Activated CD8-positive, alpha-beta T cell treated with anti-CD3 and anti-CD28 coated beads for 36 hours (primary cell): ENCODE measurements at regions of chr1 and their contacts with region 1.

Region 1: DNA sequence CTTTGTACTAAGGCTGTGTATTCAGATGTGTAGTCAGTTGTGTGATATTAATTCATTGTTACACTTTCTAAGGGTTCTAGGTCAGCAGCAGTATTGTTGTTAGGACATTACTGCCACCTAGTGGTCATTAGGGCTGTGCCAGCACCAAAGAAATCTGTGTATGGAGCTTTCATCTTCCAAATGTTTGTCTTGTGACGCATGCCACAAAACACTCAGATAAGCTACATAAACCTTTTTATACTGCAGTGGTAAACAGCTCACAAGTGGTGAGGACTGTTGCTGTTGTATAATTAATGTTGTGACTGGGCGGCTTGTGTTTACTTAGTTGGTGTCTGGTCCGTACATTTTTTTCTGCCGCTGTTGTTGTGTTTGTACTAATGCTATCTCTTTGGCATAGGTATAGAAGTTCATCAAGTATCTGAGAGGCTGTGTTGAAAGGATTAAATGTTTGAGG is 51.7 kb downstream of the S1PR1 start:
- DNase-seq: peak; percentile 79
- ATAC-seq: peak; percentile 25
- H3K4me3 Mint-ChIP-seq: no peak overlapping the region
- H3K27ac Mint-ChIP-seq: peak overlapping the region; percentile 43
- H3K4me1 Mint-ChIP-seq: peaks cover 83% of the 10 kb centered on the region
- H3K27me3 Mint-ChIP-seq: no peaks in the 10 kb centered on the region
- CTCF ChIP-seq: peak; percentile 88

Region 2: DNA sequence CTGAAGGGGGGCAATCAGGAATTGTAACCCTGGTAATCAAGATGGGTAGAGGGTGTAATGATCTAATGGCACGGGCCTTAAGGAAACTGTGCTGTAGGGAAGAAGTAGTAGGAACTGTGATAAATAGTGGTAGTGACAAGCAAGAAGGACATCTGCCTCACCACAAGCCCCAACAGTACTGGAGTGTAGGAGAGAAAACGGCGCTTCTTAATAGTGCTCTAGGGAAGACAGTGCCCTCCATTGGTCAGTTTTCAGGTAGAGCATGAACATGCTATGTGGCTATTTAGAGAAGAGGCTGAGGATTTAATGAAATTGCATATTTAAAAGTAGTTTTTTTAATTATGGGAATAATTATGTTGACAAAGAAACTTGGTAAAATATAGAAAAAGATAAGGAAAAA is 360.4 kb before region 1 on chr1:
- CTCF ChIA-PET with region 1: interaction called, 18 read pairs
- POLR2A ChIA-PET with region 1: no interaction called
- intact Hi-C with region 1: no loop called
- DNase-seq: peak; percentile 28
- ATAC-seq: peak; percentile 13
- H3K4me3 Mint-ChIP-seq: no peak overlapping the region
- H3K27ac Mint-ChIP-seq: no peak overlapping the region
- H3K4me1 Mint-ChIP-seq: peaks cover 52% of the 10 kb centered on the region
- H3K27me3 Mint-ChIP-seq: no peaks in the 10 kb centered on the region
- CTCF ChIP-seq: peak; percentile 37

Region 3: GRCh38 chr1:101128211-101128727 is 160.2 kb before region 1 on chr1:
- CTCF ChIA-PET with region 1: interaction called, 48 read pairs
- POLR2A ChIA-PET with region 1: interaction called, 5 read pairs
- intact Hi-C with region 1: no loop called
- DNase-seq: peak; percentile 53
- ATAC-seq: peak; percentile 55
- H3K4me3 Mint-ChIP-seq: peak overlapping the region; percentile 1
- H3K27ac Mint-ChIP-seq: peak overlapping the region; percentile 72
- H3K4me1 Mint-ChIP-seq: peaks cover 61% of the 10 kb centered on the region
- H3K27me3 Mint-ChIP-seq: no peaks in the 10 kb centered on the region
- CTCF ChIP-seq: no peak

Region 4: DNA sequence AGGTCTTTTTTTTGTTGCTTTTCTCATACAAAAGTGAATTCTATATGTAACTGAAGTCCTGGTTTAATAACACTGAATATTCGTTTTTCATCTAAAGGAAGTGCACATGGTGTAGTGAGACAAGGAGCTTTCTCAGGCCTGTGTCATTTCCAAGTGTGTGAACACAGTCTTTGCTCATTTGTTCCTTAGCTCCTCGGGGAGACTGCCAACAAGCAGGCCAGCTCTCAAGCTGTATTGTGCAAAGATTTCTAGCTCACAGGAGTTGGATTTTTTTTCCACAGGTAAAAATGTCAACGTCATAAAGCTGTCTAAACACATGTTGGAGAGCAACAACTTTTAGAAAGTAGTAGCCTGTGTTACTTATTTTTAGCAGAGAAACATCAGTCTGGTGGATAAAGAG is 139.5 kb before region 1 on chr1:
- CTCF ChIA-PET with region 1: interaction called, 12 read pairs
- POLR2A ChIA-PET with region 1: no interaction called
- intact Hi-C with region 1: no loop called
- DNase-seq: no peak
- ATAC-seq: no peak
- H3K4me3 Mint-ChIP-seq: no peak overlapping the region
- H3K27ac Mint-ChIP-seq: peak overlapping the region; percentile 46
- H3K4me1 Mint-ChIP-seq: peaks cover 53% of the 10 kb centered on the region
- H3K27me3 Mint-ChIP-seq: no peaks in the 10 kb centered on the region
- CTCF ChIP-seq: no peak

Region 5: GRCh38 chr1:101247404-101248287 is 40.9 kb before region 1 on chr1:
- CTCF ChIA-PET with region 1: interaction called, 301 read pairs
- POLR2A ChIA-PET with region 1: interaction called, 19 read pairs
- intact Hi-C with region 1: no loop called
- DNase-seq: no peak
- ATAC-seq: no peak
- H3K4me3 Mint-ChIP-seq: peak overlapping the region; percentile 1
- H3K27ac Mint-ChIP-seq: peak overlapping the region; percentile 44
- H3K4me1 Mint-ChIP-seq: peaks cover 64% of the 10 kb centered on the region
- H3K27me3 Mint-ChIP-seq: no peaks in the 10 kb centered on the region
- CTCF ChIP-seq: no peak

Region 6: GRCh38 chr1:101302831-101303511 is 14.5 kb after region 1 on chr1:
- CTCF ChIA-PET with region 1: interaction called, 11 read pairs
- POLR2A ChIA-PET with region 1: interaction called, 4 read pairs
- intact Hi-C with region 1: no loop called
- DNase-seq: no peak
- ATAC-seq: no peak
- H3K4me3 Mint-ChIP-seq: no peak overlapping the region
- H3K27ac Mint-ChIP-seq: no peak overlapping the region
- H3K4me1 Mint-ChIP-seq: peaks cover 19% of the 10 kb centered on the region
- H3K27me3 Mint-ChIP-seq: no peaks in the 10 kb centered on the region
- CTCF ChIP-seq: no peak

Region 7: GRCh38 chr1:101428544-101428943 is 140.0 kb after region 1 on chr1:
- CTCF ChIA-PET with region 1: no interaction called
- POLR2A ChIA-PET with region 1: no interaction called
- intact Hi-C with region 1: no loop called
- DNase-seq: no peak
- ATAC-seq: no peak
- H3K4me3 Mint-ChIP-seq: no peak overlapping the region
- H3K27ac Mint-ChIP-seq: no peak overlapping the region
- H3K4me1 Mint-ChIP-seq: no peaks in the 10 kb centered on the region
- H3K27me3 Mint-ChIP-seq: peaks cover 10% of the 10 kb centered on the region
- CTCF ChIP-seq: no peak